Panc1 (cell line): ENCODE measurements at regions of chr1 and their contacts with region 1.

Region 1: GRCh38 chr1:156625436-156626078 is 6.3 kb downstream of the HAPLN2 start:
- DNase-seq: no peak
- ATAC-seq: peak; percentile 43
- H3K4me3 ChIP-seq: peak overlapping the region; percentile 47 to 54
- H3K27ac ChIP-seq: no peak overlapping the region
- H3K4me1 ChIP-seq: peaks cover 4% of the 10 kb centered on the region
- H3K27me3 ChIP-seq: peaks cover 2% of the 10 kb centered on the region; the same call in 1 of the 2 replicates
- CTCF ChIP-seq: peak; percentile 96

Region 2: GRCh38 chr1:156659994-156660751 is 34.6 kb after region 1 on chr1:
- CTCF ChIA-PET with region 1: interaction called, 41 read pairs
- POLR2A ChIA-PET with region 1: no interaction called
- in situ Hi-C with region 1: no loop called
- intact Hi-C with region 1: loop called (anchors 1 kb)
- DNase-seq: peak; percentile 95
- ATAC-seq: peak; percentile 79
- H3K4me3 ChIP-seq: peak overlapping the region; percentile 23 to 69
- H3K27ac ChIP-seq: peak overlapping the region; percentile 98
- H3K4me1 ChIP-seq: peaks cover 61% of the 10 kb centered on the region
- H3K27me3 ChIP-seq: no peaks in the 10 kb centered on the region
- CTCF ChIP-seq: peak; percentile 100